Transverse colon (tissue), 4 donors: ENCODE measurements at regions of chr4 and their contacts with region 1.

Region 1: GRCh38 chr4:85968945-85969819 is 390.7 kb downstream of the MAPK10 start:
- DNase-seq: no peak
- H3K4me3 ChIP-seq: no peak overlapping the region
- H3K27ac ChIP-seq: no peak overlapping the region
- H3K4me1 ChIP-seq: no peaks in the 10 kb centered on the region
- H3K27me3 ChIP-seq: no peaks in the 10 kb centered on the region
- CTCF ChIP-seq: peak; percentile 55 to 65 (median 58)
- EP300 ChIP-seq: no peak
- POLR2A ChIP-seq: no peak

Region 2: GRCh38 chr4:85778632-85779131 is 190.5 kb before region 1 on chr4:
- in situ Hi-C with region 1: loop called in 2 of 4 experiments (anchors 25 kb)
- intact Hi-C with region 1: no loop called
- DNase-seq: no peak
- H3K4me3 ChIP-seq: peak overlapping the region in 3 of 4 donors; percentile 12 to 27 (median 20)
- H3K27ac ChIP-seq: peak overlapping the region; percentile 64 to 75 (median 67)
- H3K4me1 ChIP-seq: peaks cover 0 to 11% (median 0%) of the 10 kb centered on the region in 4 donors
- H3K27me3 ChIP-seq: no peaks in the 10 kb centered on the region
- CTCF ChIP-seq: no peak
- EP300 ChIP-seq: no peak
- POLR2A ChIP-seq: no peak

Region 3: DNA sequence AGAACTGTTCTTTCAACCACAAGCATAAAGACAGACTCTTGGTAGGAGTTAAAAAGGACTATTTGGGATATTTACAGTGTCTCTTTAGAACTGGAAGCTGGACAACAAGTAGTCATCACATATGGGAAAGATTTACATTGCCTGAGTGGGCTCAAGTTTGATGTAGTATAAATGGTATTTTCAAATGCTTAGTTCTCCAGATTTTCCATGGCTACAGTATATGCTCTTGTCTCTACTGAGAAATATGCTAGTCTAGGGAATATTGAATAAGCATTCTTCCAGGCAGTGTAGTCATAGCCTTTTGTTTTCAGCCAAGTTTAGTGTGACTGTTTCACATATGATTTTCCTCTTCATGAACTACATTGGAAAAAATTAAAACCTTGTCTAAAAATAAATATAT is 178.6 kb before region 1 on chr4:
- in situ Hi-C with region 1: loop called in 3 of 4 experiments (anchors 10 to 25 kb)
- intact Hi-C with region 1: no loop called
- DNase-seq: no peak
- H3K4me3 ChIP-seq: no peak overlapping the region
- H3K27ac ChIP-seq: no peak overlapping the region
- H3K4me1 ChIP-seq: peaks cover 5 to 17% (median 6%) of the 10 kb centered on the region in 4 donors
- H3K27me3 ChIP-seq: no peaks in the 10 kb centered on the region
- CTCF ChIP-seq: no peak
- EP300 ChIP-seq: no peak
- POLR2A ChIP-seq: no peak

Region 4: DNA sequence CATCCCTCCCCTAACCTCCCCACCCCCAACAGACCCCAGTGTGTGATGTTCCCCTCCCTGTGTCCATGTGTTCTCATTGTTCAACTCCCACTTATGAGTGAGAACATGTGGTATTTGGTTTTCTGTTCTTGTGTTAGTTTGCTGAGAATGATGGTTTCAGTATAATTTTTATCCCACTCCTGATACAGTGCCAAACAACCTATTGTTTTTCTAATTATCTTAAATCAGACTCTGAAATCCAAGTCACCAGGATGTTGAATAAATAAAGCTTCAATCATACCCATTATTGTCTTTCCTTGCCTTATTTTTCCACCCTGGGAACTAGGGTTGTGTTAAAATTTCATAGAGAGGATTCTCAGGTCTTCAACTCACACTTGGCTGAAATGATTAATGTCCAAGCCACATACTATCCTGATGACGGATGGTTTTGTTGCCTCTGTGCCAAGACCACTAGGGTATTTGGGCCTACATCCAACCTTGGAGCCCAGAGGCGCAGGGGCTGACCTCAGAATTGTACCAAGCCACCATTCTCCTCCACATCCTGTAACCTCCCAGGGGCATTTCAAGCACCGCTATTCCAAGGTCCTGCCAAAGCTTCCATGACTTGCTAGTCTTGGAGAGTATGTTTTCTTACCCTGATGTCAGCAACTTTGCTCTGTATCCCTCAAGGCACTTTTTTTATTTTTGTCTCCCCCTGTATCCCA is 161.8 kb before region 1 on chr4:
- in situ Hi-C with region 1: loop called in 1 of 4 experiments (anchors 25 kb)
- intact Hi-C with region 1: no loop called
- DNase-seq: no peak
- H3K4me3 ChIP-seq: no peak overlapping the region
- H3K27ac ChIP-seq: no peak overlapping the region
- H3K4me1 ChIP-seq: peaks cover 0 to 7% (median 3%) of the 10 kb centered on the region in 4 donors
- H3K27me3 ChIP-seq: no peaks in the 10 kb centered on the region
- CTCF ChIP-seq: no peak
- EP300 ChIP-seq: no peak
- POLR2A ChIP-seq: no peak